ENCODE measurements at regions of chr11 and their contacts with region 1.

Region 1: DNA sequence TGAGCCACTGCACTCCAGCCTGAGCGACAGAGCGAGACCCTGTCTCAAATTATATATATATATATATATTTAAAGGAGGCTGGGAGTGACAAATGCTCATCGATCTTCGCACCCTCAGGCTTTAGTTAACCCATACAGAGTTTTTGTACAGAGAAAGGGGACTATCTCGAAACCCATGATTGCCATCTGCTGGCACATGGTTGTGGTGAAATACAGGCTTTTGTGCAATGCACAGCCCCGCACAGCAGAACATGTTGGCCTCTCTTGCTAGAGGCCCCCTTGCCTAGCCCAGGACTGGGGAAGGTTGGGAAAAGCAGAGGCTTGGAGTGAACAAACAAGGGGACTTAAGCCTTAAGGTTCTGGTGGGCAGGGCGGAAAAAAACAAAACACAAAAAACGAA is 3.6 kb downstream of the MYBPC3 start:
- DNase-seq: peak; percentile 65
- H3K4me3 ChIP-seq: no peak overlapping the region
- H3K27ac ChIP-seq: no peak overlapping the region
- H3K4me1 ChIP-seq: peaks cover 0 to 7% of the 10 kb centered on the region in 2 experiments; a peak in 1 of 4 replicates
- H3K27me3 ChIP-seq: no peaks in the 10 kb centered on the region
- CTCF ChIP-seq: peak; percentile 41
- EP300 ChIP-seq: no peak
- RAD21 ChIP-seq: peak; percentile 61

Region 2: GRCh38 chr11:47213985-47214564 is 134.8 kb before region 1 on chr11:
- CTCF ChIA-PET with region 1: no interaction called
- POLR2A ChIA-PET with region 1: no interaction called
- DNase-seq: peak; percentile 88
- H3K4me3 ChIP-seq: peak overlapping the region; percentile 61 to 79
- H3K27ac ChIP-seq: peak overlapping the region; percentile 87 to 90
- H3K4me1 ChIP-seq: peaks cover 16 to 20% of the 10 kb centered on the region in 2 experiments; a peak in 2 of 4 replicates
- H3K27me3 ChIP-seq: no peaks in the 10 kb centered on the region
- CTCF ChIP-seq: no peak
- EP300 ChIP-seq: no peak
- RAD21 ChIP-seq: no peak

Region 3: DNA sequence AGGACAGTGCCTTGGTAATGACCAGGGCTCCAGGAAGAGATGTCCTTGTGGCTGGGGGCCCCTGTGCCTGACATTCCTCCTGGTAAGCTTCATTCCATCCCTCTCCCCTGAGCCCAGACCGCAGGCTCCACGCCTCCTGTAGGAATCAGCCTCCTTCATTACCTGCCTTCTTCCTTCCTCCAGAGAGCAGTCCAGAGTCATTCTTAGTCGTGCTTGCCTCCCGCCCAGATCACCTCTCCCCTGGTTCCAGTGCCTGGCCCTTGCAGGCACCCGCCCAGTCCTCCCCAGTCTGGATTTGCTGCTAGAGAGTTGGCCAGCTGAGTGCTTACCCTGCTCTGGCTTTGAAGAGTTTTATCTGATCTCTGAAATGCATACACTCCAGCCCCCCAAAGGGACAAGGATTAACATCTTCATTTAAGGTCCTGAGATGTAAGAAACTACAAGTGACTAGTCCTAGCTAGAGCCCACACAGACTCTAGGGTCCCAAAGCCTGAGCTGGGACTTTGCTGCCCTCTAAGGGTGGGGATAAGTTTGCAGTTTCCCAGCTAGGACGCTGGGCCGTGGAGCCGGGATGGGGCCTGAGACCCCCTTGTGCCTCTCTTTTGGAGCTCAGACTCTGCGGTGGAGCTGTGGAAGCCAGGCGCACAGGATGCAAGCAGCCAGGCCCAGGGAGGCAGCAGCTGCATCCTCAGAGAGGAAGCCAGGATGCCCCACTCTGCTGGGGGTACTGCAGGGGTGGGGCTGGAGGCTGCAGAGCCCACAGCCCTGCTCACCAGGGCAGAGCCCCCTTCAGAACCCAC is 89.5 kb before region 1 on chr11:
- CTCF ChIA-PET with region 1: interaction called, 29 read pairs
- POLR2A ChIA-PET with region 1: no interaction called
- DNase-seq: peak; percentile 74
- H3K4me3 ChIP-seq: no peak overlapping the region
- H3K27ac ChIP-seq: no peak overlapping the region
- H3K4me1 ChIP-seq: peaks cover 17 to 20% of the 10 kb centered on the region in 2 experiments; a peak in 3 of 4 replicates
- H3K27me3 ChIP-seq: no peaks in the 10 kb centered on the region
- CTCF ChIP-seq: peak; percentile 58
- EP300 ChIP-seq: no peak
- RAD21 ChIP-seq: peak; percentile 73